ENCODE measurements at regions of chr15 and their contacts with region 1.

Region 1: GRCh38 chr15:50051803-50052419 is 67.1 kb downstream of the ATP8B4 start:
- DNase-seq: no peak
- ATAC-seq: peak; percentile 44
- H3K4me3 ChIP-seq: no peak overlapping the region
- H3K27ac ChIP-seq: no peak overlapping the region
- H3K4me1 ChIP-seq: no peaks in the 10 kb centered on the region
- H3K27me3 ChIP-seq: no peaks in the 10 kb centered on the region
- CTCF ChIP-seq: peak; percentile 44 to 51 (median 50)
- EP300 ChIP-seq: no peak
- POLR2A ChIP-seq: no peak
- RAD21 ChIP-seq: peak; percentile 56

Region 2: GRCh38 chr15:49242820-49243219 is 809.1 kb before region 1 on chr15:
- CTCF ChIA-PET with region 1: interaction called, 6 read pairs
- POLR2A ChIA-PET with region 1: no interaction called
- RAD21 ChIA-PET with region 1: no interaction called
- SMC1A ChIA-PET with region 1: no interaction called
- in situ Hi-C with region 1: loop called (anchors 10 kb)
- intact Hi-C with region 1: no loop called
- DNase-seq: no peak
- ATAC-seq: no peak
- H3K4me3 ChIP-seq: no peak overlapping the region
- H3K27ac ChIP-seq: no peak overlapping the region
- H3K4me1 ChIP-seq: no peaks in the 10 kb centered on the region
- H3K27me3 ChIP-seq: no peaks in the 10 kb centered on the region
- CTCF ChIP-seq: no peak
- EP300 ChIP-seq: no peak
- POLR2A ChIP-seq: no peak
- RAD21 ChIP-seq: no peak

Region 3: GRCh38 chr15:49471733-49472132 is 580.2 kb before region 1 on chr15:
- CTCF ChIA-PET with region 1: interaction called, 12 read pairs
- POLR2A ChIA-PET with region 1: no interaction called
- RAD21 ChIA-PET with region 1: interaction called, 4 read pairs
- SMC1A ChIA-PET with region 1: interaction called, 4 read pairs
- in situ Hi-C with region 1: no loop called
- intact Hi-C with region 1: no loop called
- DNase-seq: peak; percentile 40
- ATAC-seq: peak; percentile 73
- H3K4me3 ChIP-seq: no peak overlapping the region
- H3K27ac ChIP-seq: peak overlapping the region; percentile 31
- H3K4me1 ChIP-seq: peaks cover 7% of the 10 kb centered on the region
- H3K27me3 ChIP-seq: no peaks in the 10 kb centered on the region
- CTCF ChIP-seq: no peak
- EP300 ChIP-seq: peak; percentile 42 to 81; a peak in 3 of 4 replicates
- POLR2A ChIP-seq: no peak
- RAD21 ChIP-seq: no peak

Region 4: GRCh38 chr15:50009634-50010033 is 42.3 kb before region 1 on chr15:
- CTCF ChIA-PET with region 1: interaction called, 114 read pairs
- POLR2A ChIA-PET with region 1: interaction called, 5 read pairs
- RAD21 ChIA-PET with region 1: interaction called, 50 read pairs
- SMC1A ChIA-PET with region 1: interaction called, 53 read pairs
- in situ Hi-C with region 1: no loop called
- intact Hi-C with region 1: no loop called
- DNase-seq: no peak
- ATAC-seq: peak; percentile 85
- H3K4me3 ChIP-seq: no peak overlapping the region
- H3K27ac ChIP-seq: no peak overlapping the region
- H3K4me1 ChIP-seq: no peaks in the 10 kb centered on the region
- H3K27me3 ChIP-seq: no peaks in the 10 kb centered on the region; a peak in 1 of 4 replicates
- CTCF ChIP-seq: no peak
- EP300 ChIP-seq: peak; percentile 44 to 50; a peak in 1 of 4 replicates
- POLR2A ChIP-seq: no peak
- RAD21 ChIP-seq: no peak